Calu3 (cell line): ENCODE measurements at regions of chr19 and their contacts with region 1.

Region 1: GRCh38 chr19:11987405-11988281 is 22.8 kb downstream of the ZNF763 start:
- DNase-seq: peak; percentile 91
- H3K4me3 Mint-ChIP-seq: peak overlapping the region; percentile 83
- H3K27ac Mint-ChIP-seq: peak overlapping the region; percentile 54
- H3K4me1 Mint-ChIP-seq: no peaks in the 10 kb centered on the region
- H3K27me3 Mint-ChIP-seq: no peaks in the 10 kb centered on the region
- CTCF ChIP-seq: no peak

Region 2: DNA sequence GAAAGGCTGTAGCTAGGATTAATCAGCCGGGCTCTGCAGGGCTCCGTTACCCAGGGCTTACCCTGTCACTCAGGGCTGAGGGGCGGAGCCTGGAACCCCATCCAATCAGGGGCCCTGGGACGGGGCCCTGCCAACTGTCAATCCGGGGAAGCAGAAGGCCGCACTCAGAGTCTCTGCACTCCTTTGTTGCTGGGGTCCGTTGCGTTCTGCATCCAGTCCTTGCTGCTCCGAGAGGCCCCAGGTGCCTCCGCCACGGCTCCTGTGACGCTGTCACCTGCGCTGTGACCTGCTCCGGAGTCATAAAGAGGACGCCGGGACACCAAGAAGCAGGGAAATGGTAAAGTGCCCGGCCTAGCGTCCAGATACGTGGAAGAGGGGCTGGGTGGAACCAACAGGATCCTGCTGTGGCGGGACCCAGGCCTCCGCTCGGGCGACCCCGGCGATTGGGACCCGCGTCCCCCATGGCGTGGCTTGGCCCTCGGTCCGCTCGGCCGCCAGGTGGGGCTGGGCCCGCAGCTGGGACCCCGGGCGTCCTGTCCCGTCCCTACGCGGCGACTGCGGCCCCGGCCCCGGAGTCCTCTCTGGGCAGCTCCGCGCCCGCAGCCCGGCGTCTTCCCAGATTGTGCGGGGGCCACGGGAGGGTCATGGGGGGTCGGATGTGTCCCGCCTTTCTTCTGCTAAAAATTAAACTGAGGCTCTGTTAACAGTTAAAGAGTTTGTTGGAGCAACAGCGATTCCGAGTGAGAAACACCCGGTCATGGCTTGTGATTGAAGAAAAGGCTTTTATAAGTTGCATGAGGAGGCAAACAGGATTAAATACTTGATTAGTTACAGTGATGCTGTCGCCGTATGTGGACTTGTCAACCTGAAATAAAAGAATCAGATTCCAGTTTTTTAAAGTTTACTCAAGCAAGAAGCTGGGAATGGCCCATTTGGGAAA is 189.0 kb before region 1 on chr19 and contains the start of gene ZNF491:
- CTCF ChIA-PET with region 1: interaction called, 19 read pairs
- intact Hi-C with region 1: loop called (anchors 2 kb)
- DNase-seq: peak; percentile 79
- H3K4me3 Mint-ChIP-seq: peak within 1 kb of the TSS; percentile 77
- H3K27ac Mint-ChIP-seq: no peak within 1 kb of the TSS
- H3K4me1 Mint-ChIP-seq: no peaks in the 10 kb centered on the region
- H3K27me3 Mint-ChIP-seq: no peaks in the 10 kb centered on the region
- CTCF ChIP-seq: no peak
- total RNA-seq, gene ZNF491: 0.24 and 0.92 TPM in 2 replicates

Region 3: DNA sequence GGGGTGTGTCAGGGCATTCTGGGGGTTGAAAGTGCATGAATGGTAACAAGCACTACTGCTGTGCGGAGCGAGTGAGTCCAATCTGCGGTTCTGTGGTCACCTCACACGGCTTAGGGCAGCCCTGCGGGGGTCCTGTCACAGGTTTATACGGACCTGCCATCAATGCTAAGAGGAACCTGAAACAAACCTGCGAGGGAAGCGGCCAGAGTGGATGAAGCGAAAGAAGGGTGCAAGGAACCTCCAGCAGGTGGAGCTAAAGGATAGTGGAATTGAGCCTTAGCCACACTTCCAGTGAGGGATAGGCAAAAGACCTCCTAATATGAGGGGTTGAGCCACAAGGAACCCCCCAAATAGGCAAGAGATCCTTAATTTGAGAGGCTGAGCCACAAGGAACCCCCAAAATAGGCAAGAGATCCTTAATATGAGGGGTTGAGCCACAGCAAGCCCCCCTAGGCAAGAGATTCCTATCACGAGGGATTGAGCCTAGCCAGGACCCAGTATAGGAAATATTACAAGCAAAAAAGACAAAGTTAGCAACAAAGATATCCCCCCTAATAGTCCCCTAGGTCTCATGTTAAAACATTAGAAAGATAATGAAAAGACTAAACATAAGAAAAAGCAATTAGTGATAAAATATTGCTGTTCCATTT is 106.4 kb before region 1 on chr19:
- CTCF ChIA-PET with region 1: interaction called, 4 read pairs
- intact Hi-C with region 1: loop called (anchors 2 kb)
- DNase-seq: peak; percentile 35
- H3K4me3 Mint-ChIP-seq: no peak overlapping the region
- H3K27ac Mint-ChIP-seq: no peak overlapping the region
- H3K4me1 Mint-ChIP-seq: no peaks in the 10 kb centered on the region
- H3K27me3 Mint-ChIP-seq: no peaks in the 10 kb centered on the region
- CTCF ChIP-seq: peak; percentile 46

Region 4: DNA sequence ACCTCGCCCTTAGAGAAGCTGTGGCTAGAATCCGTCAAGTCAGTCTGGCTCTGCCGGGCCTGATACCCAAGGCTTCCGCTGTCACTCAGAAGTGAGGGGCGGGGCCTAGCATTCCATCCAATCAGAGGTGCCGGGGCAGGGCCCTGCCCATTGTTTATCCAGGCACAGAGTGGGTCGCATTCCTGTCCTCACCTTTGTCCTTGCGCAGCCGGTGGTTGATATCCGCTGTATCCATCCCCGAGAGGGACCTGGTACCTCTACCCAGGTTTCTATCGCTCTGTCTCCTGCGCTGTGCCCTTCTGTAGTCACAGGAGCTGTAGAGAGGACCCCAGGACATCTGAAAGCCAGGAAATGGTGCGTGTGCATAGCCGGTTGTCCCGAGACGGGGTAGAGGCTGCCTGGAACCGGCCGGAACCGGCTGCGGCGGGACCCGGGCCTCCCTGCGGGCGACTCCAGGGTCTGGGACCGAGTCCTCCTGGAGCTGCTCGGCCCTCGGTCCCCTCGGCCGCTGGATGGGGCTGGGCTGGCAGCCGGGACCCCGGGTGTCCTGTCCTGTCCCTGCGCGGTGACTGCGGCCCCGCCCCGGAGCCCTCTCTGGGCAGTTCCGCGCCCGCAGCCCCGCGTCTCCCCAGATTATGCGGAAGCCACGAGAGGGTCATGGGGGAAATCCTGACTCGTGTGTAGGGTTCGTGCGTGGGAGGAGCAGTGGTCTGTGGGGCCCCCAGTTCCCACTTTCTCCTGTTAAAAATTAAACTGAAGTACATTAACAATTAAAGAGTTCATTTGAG is 22.6 kb before region 1 on chr19 and contains the start of gene ZNF763:
- CTCF ChIA-PET with region 1: no interaction called
- intact Hi-C with region 1: loop called (anchors 1 kb)
- DNase-seq: peak; percentile 87
- H3K4me3 Mint-ChIP-seq: peak within 1 kb of the TSS; percentile 63
- H3K27ac Mint-ChIP-seq: no peak within 1 kb of the TSS
- H3K4me1 Mint-ChIP-seq: peaks cover 9% of the 10 kb centered on the region
- H3K27me3 Mint-ChIP-seq: no peaks in the 10 kb centered on the region
- CTCF ChIP-seq: no peak
- total RNA-seq, gene ZNF763: 1.7 and 2.0 TPM in 2 replicates

Region 5: GRCh38 chr19:12353375-12353774 is 365.7 kb after region 1 on chr19:
- CTCF ChIA-PET with region 1: no interaction called
- intact Hi-C with region 1: no loop called
- DNase-seq: no peak
- H3K4me3 Mint-ChIP-seq: no peak overlapping the region
- H3K27ac Mint-ChIP-seq: no peak overlapping the region
- H3K4me1 Mint-ChIP-seq: no peaks in the 10 kb centered on the region
- H3K27me3 Mint-ChIP-seq: no peaks in the 10 kb centered on the region
- CTCF ChIP-seq: no peak